Stomach (tissue), 19 donors: ENCODE measurements at regions of chr12 and their contacts with region 1.

Region 1: GRCh38 chr12:43882578-43883178 is 46.8 kb downstream of the TMEM117 start:
- DNase-seq: peak in 1 of 2 donors; percentile 82
- H3K4me3 ChIP-seq: no peak overlapping the region
- H3K27ac ChIP-seq: no peak overlapping the region
- H3K4me1 ChIP-seq: peaks cover 0 to 11% (median 2%) of the 10 kb centered on the region in 4 donors
- H3K27me3 ChIP-seq: no peaks in the 10 kb centered on the region
- CTCF ChIP-seq: peak in 5 of 7 experiments; percentile 63 to 79 (median 65)
- EP300 ChIP-seq: no peak
- POLR2A ChIP-seq: no peak

Region 2: GRCh38 chr12:43444940-43445564 is 437.6 kb before region 1 on chr12:
- intact Hi-C with region 1: loop called (anchors 10 kb)
- DNase-seq: peak; percentile 51 to 73
- H3K4me3 ChIP-seq: no peak overlapping the region
- H3K27ac ChIP-seq: no peak overlapping the region
- H3K4me1 ChIP-seq: no peaks in the 10 kb centered on the region
- H3K27me3 ChIP-seq: no peaks in the 10 kb centered on the region
- CTCF ChIP-seq: peak in 4 of 7 experiments; percentile 42 to 60 (median 52)
- EP300 ChIP-seq: no peak
- POLR2A ChIP-seq: no peak